ENCODE measurements at regions of chr3 and their contacts with region 1.

Region 1: GRCh38 chr3:73432023-73432705 is 192.6 kb downstream of the PDZRN3 start:
- DNase-seq: peak; percentile 37 to 48 (median 44)
- ATAC-seq: 0 out of 3 replicates have a peak, but pooled peaks have one; percentile 42
- H3K4me3 ChIP-seq: no peak overlapping the region
- H3K27ac ChIP-seq: no peak overlapping the region
- H3K4me1 ChIP-seq: no peaks in the 10 kb centered on the region
- H3K27me3 ChIP-seq: no peaks in the 10 kb centered on the region
- CTCF ChIP-seq: peak; percentile 53 to 64 (median 56)
- EP300 ChIP-seq: no peak
- POLR2A ChIP-seq: no peak
- RAD21 ChIP-seq: peak; percentile 45 to 59; a peak in 3 of 4 replicates

Region 2: GRCh38 chr3:73094951-73095350 is 337.2 kb before region 1 on chr3:
- CTCF ChIA-PET with region 1: interaction called, 5 read pairs
- POLR2A ChIA-PET with region 1: no interaction called
- in situ Hi-C with region 1: loop called (anchors 5 kb)
- intact Hi-C with region 1: no loop called
- DNase-seq: no peak
- ATAC-seq: no peak
- H3K4me3 ChIP-seq: no peak overlapping the region
- H3K27ac ChIP-seq: no peak overlapping the region
- H3K4me1 ChIP-seq: no peaks in the 10 kb centered on the region; a peak in 1 of 5 replicates
- H3K27me3 ChIP-seq: peaks cover 0 to 12% of the 10 kb centered on the region in 2 experiments; a peak in 2 of 5 replicates
- CTCF ChIP-seq: no peak
- EP300 ChIP-seq: no peak
- POLR2A ChIP-seq: no peak
- RAD21 ChIP-seq: no peak

Region 3: DNA sequence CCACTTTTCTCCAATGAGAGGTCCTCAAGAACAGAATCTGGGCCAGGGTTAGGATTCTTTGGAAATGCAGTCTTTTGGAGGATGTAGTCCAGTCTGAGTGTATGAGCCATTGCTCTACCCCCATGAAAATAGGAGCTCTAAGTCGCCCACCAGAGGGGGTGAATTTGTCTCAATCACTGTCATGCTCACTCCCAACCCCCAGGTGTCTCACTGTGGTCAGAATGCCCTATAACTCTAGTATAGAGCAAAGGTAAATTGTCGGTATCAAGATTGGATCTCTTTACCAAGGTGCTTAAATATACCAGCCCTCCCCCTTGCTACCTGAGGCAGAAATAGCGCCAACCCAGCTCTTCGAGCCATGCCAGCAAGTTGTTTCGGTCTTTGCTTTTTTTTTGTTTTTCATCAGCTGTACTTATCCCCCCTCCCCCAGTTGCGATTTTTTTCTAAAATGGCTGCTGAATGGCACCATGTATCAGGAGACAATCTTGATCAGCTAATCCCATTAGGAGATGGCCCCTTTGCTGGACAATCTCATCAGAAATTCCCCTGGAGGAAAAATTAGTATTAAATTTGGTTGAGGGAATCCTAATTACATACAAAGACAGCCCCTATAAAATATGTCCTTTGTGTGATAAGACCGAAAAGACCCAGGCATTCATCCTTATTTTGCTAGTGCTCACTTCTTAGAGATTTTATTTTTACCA is 240.0 kb before region 1 on chr3:
- CTCF ChIA-PET with region 1: no interaction called
- POLR2A ChIA-PET with region 1: no interaction called
- in situ Hi-C with region 1: no loop called
- intact Hi-C with region 1: loop called (anchors 1 kb)
- DNase-seq: peak; percentile 16 to 36 (median 26)
- ATAC-seq: peak; percentile 90
- H3K4me3 ChIP-seq: no peak overlapping the region
- H3K27ac ChIP-seq: no peak overlapping the region
- H3K4me1 ChIP-seq: no peaks in the 10 kb centered on the region
- H3K27me3 ChIP-seq: no peaks in the 10 kb centered on the region
- CTCF ChIP-seq: peak; percentile 51 to 98 (median 81)
- EP300 ChIP-seq: no peak
- POLR2A ChIP-seq: no peak
- RAD21 ChIP-seq: peak in 1 of 2 experiments; percentile 39; a peak in 2 of 4 replicates

Measured in K562 (cell line).